Activated CD8-positive, alpha-beta memory T cell treated with anti-CD3 and anti-CD28 coated beads, Interleukin-2, amount 10 ng/mL, durations not matched to agents 7 days and 5 days (primary cell): ENCODE measurements at regions of chr4 and their contacts with region 1.

Region 1: DNA sequence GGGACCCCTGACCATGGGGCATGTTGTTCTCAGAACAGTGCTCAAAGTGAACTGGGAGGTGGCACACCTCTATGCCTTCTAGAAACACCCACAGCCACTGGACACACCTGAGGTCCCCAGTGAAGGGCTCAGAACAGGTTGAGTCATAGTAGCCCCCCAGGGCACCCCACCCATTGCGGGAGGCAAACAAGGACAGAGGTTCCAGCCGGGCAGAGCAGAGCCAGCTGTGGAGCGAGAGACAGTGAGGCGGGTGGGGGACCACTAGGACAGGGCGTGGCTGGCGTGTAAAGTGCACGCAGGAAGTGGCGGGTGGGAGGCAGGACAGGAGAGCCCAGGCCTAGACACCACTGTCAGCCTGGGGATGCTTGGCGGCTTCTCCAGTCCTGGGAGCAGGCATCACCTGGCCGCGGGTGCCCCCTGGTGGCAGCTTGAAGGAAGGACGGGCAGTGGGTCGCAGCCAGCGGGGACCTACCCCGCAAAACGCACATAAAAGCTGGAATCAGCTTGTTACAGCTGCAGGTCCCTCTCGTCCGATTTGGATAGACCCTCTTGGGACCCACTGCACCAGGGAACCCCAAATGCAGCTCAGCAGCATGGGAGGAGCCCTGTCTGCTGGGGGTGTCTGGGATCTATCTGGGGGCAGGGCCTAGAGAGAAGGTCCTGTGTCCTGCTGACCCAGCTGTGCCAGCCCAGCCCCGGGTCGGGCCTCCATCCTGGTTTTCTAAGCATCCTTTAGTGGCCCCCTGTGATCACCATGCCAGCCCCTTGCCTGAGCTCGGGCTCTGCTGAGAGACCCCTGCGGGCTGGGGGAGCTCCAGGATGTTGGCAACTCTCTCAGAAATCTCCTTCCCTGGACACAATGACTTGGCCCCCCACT is 57.6 kb downstream of the WFS1 start:
- DNase-seq: peak; percentile 85
- ATAC-seq: peak; percentile 85
- H3K4me3 Mint-ChIP-seq: no peak overlapping the region
- H3K27ac Mint-ChIP-seq: no peak overlapping the region
- H3K4me1 Mint-ChIP-seq: peaks cover 26% of the 10 kb centered on the region
- H3K27me3 Mint-ChIP-seq: peaks cover 56% of the 10 kb centered on the region

Region 2: DNA sequence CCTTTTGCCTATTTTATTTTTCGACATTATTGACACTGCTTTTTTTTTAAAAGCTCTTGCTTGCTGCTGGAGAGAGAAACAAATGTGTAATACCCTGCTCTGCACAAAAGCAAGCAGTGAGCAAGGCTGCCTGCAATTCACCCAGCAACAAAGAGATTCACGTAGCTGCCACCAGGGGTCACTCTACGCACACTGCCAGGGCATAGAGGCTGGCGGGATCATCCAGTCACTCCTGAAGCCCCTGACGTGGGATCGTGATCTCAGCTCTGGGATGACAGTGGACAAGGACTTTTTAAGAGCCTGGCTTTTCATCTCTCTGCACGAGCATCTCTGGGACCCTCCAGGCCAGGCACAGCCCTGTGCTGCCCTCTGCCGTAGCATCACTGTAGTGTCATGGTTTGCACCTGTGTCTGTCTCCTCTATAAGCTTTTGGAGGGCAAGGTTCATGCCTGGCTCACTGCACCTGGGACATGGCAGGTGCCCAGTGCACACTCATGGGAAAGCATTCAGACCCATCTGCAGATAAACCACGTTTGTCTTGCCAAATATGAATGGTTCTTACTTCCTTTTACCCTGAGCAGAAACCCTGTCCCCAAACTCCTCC is 328.8 kb before region 1 on chr4:
- CTCF ChIA-PET with region 1: interaction called, 107 read pairs
- DNase-seq: peak; percentile 66
- ATAC-seq: peak; percentile 77
- H3K4me3 Mint-ChIP-seq: no peak overlapping the region
- H3K27ac Mint-ChIP-seq: no peak overlapping the region
- H3K4me1 Mint-ChIP-seq: peaks cover 18% of the 10 kb centered on the region
- H3K27me3 Mint-ChIP-seq: peaks cover 7% of the 10 kb centered on the region

Region 3: DNA sequence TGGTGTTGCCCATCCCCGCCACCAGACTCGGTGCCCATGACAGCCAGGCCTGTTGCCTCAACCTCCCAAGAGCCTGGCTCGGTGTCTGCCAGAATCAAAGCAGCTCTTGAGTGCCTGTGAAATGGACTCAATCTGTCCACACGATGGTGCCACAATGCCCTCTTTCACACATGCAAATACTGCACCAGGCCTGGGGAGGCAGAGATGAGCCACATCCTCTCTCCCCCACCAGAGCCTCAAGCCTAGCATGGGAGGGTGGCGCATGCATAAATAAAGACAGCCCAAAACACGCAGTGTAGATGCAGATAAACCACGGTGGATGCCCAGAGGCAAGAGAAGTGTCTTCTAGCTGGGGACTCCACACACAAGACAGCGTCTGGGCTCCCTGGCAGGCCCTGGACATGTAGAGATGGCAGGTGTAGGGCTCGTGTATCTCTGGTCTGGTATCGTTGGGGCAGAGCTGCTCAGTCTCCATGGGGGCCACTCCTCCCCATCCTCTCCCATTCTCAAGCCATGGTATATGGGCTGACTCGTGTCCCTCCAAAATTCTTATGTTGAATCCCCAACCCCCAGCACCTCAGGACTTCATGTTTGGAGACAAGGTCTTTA is 192.6 kb before region 1 on chr4:
- CTCF ChIA-PET with region 1: interaction called, 16 read pairs
- DNase-seq: peak; percentile 87
- ATAC-seq: peak; percentile 100
- H3K4me3 Mint-ChIP-seq: no peak overlapping the region
- H3K27ac Mint-ChIP-seq: peak overlapping the region; percentile 74
- H3K4me1 Mint-ChIP-seq: peaks cover 36% of the 10 kb centered on the region
- H3K27me3 Mint-ChIP-seq: no peaks in the 10 kb centered on the region

Region 4: DNA sequence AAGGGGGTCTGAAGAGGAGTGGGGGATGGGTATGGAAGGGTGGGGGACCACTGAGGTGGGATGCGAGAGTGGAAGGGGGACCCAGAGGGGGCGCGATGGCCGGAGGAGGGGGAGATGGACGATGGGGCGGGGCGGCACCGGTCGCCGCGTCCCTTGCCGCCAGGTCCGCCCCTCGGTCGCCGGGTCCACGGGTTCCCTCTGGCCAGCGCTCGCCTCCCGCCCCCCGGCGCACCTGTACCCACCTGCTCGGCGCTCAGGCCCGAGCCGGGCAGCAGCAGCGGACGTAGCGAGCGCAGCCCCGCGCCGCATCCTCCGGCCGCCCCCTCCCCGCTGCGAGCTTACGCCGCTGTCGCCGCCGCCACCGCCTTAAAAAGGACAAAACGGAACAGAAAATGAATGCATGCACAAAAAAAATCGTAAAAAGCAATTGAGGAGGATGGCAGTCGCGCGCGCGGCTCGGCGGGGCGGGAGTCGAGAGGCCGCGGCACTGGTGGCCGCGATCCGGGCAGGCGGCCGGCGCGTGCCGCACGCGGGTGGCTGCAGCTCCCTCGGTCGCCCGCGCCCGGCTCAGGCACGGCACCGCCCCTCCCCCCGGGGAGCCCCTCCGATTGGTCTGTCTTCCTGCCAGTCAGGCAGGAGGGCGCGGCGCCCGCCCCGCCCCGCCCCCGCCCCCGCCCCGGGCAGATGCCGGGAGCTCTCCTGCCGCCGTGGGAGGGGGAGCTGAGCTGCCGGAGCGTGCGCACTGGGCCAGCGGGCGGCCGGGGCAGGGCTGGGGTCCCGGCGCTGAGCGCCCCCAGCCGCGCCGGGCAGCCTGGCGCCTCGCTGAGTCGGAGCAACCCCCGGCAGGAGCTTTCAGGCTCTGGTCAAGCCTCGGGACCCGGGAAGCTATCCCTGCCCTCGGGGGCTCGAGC is 127.0 kb before region 1 on chr4 and contains the start of gene JAKMIP1:
- CTCF ChIA-PET with region 1: interaction called, 14 read pairs
- DNase-seq: peak; percentile 93
- ATAC-seq: peak; percentile 70
- H3K4me3 Mint-ChIP-seq: peak within 1 kb of the TSS; percentile 94
- H3K27ac Mint-ChIP-seq: peak within 1 kb of the TSS; percentile 80
- H3K4me1 Mint-ChIP-seq: peaks cover 48% of the 10 kb centered on the region
- H3K27me3 Mint-ChIP-seq: peaks cover 11% of the 10 kb centered on the region
- total RNA-seq, gene JAKMIP1: 41.7 to 57.8 TPM

Region 5: DNA sequence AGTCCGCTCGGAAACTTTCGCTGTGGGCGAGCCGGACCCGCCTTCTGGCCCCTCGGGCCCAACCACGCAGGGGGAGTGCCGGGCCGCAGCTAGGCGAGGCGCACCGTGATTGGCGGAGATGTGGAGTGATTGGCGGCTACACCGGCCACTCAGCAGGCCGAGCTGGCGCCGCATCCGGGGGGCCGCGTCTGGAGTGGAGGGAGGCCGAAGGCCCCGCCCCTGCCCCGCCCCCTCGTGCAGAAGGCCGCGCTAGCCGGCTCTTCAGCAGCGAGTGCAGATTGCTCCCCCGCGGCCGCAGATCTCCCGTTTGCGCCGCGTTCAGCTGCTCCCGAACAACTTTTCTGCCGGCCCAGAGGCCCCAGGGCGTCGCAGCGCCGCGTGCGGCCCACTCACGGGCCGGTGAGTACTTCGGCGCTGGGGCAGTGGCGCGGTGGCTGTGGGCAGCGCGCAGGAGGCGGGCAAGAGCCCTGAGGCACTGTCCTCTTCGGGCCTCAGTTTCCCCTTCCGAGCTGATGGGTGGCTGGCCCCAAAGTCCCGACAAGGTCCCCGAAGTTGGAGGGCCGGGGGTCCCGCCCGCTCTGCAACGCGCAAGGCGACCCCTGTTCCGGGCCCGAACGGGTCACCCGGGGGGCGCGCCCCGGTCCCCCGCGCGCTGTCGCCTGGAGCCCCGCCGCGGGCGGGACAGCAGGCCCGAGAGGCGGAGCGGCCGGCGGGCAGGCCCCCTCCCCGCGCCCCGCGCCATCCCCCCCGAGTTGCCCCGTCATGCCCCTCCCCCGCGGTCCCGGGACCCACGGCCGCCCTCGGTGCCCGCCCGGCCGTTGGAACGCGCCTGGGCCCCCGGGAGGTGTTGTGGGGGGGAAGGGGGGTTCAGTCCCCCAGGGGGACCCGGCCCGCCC is 57.4 kb before region 1 on chr4 and contains the start of gene WFS1:
- CTCF ChIA-PET with region 1: interaction called, 685 read pairs
- DNase-seq: peak; percentile 98
- ATAC-seq: peak; percentile 100
- H3K4me3 Mint-ChIP-seq: peak within 1 kb of the TSS; percentile 67
- H3K27ac Mint-ChIP-seq: no peak within 1 kb of the TSS
- H3K4me1 Mint-ChIP-seq: peaks cover 26% of the 10 kb centered on the region
- H3K27me3 Mint-ChIP-seq: peaks cover 58% of the 10 kb centered on the region
- total RNA-seq, gene WFS1: 1.8 to 2.2 TPM

Region 6: DNA sequence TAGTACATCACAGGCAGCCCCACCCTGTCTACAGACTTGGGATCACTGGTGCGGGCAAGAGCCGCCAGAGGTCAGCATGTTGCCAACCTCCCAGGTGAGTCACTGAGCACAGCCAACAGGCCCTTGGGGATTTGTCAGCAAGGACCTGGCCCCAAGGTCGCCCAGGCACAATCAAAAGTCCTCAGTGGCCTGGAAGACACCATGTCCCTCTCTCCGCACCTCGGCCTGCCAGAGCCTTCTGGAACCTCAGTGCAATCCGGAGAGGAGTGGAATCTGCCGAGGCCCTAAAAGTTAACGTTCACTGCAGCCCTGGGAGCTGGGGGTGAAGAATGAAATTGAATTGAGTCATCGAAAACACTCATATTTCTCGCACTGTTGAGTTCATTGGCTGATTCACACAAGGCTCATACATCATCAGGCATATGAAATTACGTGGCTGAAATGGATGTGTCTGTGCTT is 16.7 kb after region 1 on chr4:
- CTCF ChIA-PET with region 1: interaction called, 28 read pairs
- DNase-seq: no peak
- ATAC-seq: no peak
- H3K4me3 Mint-ChIP-seq: no peak overlapping the region
- H3K27ac Mint-ChIP-seq: no peak overlapping the region
- H3K4me1 Mint-ChIP-seq: peaks cover 3% of the 10 kb centered on the region
- H3K27me3 Mint-ChIP-seq: peaks cover 25% of the 10 kb centered on the region

Region 7: GRCh38 chr4:6427439-6428090 is 100.3 kb after region 1 on chr4:
- CTCF ChIA-PET with region 1: no interaction called
- DNase-seq: no peak
- ATAC-seq: no peak
- H3K4me3 Mint-ChIP-seq: no peak overlapping the region
- H3K27ac Mint-ChIP-seq: no peak overlapping the region
- H3K4me1 Mint-ChIP-seq: peaks cover 10% of the 10 kb centered on the region
- H3K27me3 Mint-ChIP-seq: peaks cover 10% of the 10 kb centered on the region

Region 8: GRCh38 chr4:6546681-6547447 is 219.6 kb after region 1 on chr4:
- CTCF ChIA-PET with region 1: interaction called, 18 read pairs
- DNase-seq: peak; percentile 63
- ATAC-seq: peak; percentile 57
- H3K4me3 Mint-ChIP-seq: no peak overlapping the region
- H3K27ac Mint-ChIP-seq: no peak overlapping the region
- H3K4me1 Mint-ChIP-seq: no peaks in the 10 kb centered on the region
- H3K27me3 Mint-ChIP-seq: peaks cover 7% of the 10 kb centered on the region